CD4-positive, alpha-beta memory T cell (primary cell): ENCODE measurements at regions of chr1 and their contacts with region 1.

Region 1: GRCh38 chr1:62687903-62688686 is at the start of gene DOCK7:
- DNase-seq: peak; percentile 50 to 61 (median 57)
- H3K4me3 ChIP-seq: peak within 1 kb of the TSS; percentile 50 to 79
- H3K4me3 Mint-ChIP-seq: peak within 1 kb of the TSS; percentile 95 to 98 (median 96)
- H3K27ac ChIP-seq: peak within 1 kb of the TSS; percentile 38
- H3K27ac Mint-ChIP-seq: peak within 1 kb of the TSS; percentile 90 to 96 (median 94)
- H3K4me1 ChIP-seq: peaks cover 6% of the 10 kb centered on the region
- H3K4me1 Mint-ChIP-seq: peaks cover 20 to 37% (median 27%) of the 10 kb centered on the region in 4 donors
- H3K27me3 ChIP-seq: no peaks in the 10 kb centered on the region
- H3K27me3 Mint-ChIP-seq: peaks cover 0 to 2% of the 10 kb centered on the region in 2 donors
- total RNA-seq, gene DOCK7: 17.4 to 20.8 TPM

Region 2: DNA sequence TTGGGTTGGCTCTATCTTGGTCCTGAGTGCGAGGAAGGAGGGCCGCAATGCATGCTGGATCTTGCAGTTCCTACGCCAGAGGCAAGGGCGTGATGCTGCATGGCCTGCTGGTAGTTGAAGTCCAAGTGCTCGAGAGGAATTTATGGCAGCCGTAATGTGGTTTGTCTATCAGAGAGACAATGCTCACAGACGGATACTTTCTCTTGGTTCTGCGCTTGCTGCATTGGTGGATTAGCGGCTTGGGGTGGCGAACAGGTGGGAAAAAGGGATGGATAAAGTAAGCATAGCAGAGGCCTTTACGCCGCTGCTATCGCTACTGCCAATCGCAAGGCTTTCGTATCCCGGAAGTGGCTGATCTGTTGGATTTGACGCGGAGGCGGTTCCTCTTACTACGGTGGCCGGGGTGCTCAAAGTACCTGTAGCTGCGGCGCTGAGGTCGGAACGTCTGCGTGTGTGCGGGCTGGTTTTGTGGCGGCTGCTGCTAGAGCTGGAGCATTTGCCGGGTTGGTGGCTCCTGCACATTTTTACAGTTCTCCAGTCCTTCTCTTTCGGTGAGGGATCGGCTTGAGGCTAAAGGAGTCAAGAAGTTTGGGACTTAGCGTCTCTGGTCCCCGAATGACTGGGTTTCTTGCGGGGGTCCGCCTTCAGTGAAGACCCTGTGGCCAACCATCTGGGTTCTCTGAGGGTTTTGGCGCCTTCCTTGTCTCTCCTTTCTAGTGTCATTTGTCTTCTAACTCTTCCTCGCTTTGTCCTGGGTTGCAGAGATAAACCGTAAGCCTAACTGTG is 95.8 kb after region 1 on chr1 and contains the start of gene ATG4C:
- CTCF ChIA-PET with region 1: no interaction called
- POLR2A ChIA-PET with region 1: no interaction called
- intact Hi-C with region 1: loop called (anchors 1 kb)
- DNase-seq: peak; percentile 95 to 97 (median 96)
- H3K4me3 ChIP-seq: peak within 1 kb of the TSS; percentile 94 to 100
- H3K4me3 Mint-ChIP-seq: no peak within 1 kb of the TSS
- H3K27ac ChIP-seq: peak within 1 kb of the TSS; percentile 85
- H3K27ac Mint-ChIP-seq: no peak within 1 kb of the TSS
- H3K4me1 ChIP-seq: peaks cover 14% of the 10 kb centered on the region
- H3K4me1 Mint-ChIP-seq: peaks cover 5 to 10% (median 7%) of the 10 kb centered on the region in 4 donors
- H3K27me3 ChIP-seq: no peaks in the 10 kb centered on the region
- H3K27me3 Mint-ChIP-seq: peaks cover 3 to 4% of the 10 kb centered on the region in 2 donors
- total RNA-seq, gene ATG4C: 11.7 to 15.2 TPM